ENCODE measurements at regions of chr4 and their contacts with region 1.

Region 1: GRCh38 chr4:7802093-7802726 is 137.5 kb downstream of the AFAP1 start:
- DNase-seq: peak; percentile 85
- H3K4me3 ChIP-seq: no peak overlapping the region
- H3K27ac ChIP-seq: no peak overlapping the region
- H3K4me1 ChIP-seq: peaks cover 8 to 38% (median 22%) of the 10 kb centered on the region in 4 donors
- H3K27me3 ChIP-seq: no peaks in the 10 kb centered on the region
- CTCF ChIP-seq: peak; percentile 90 to 94 (median 92)
- EP300 ChIP-seq: no peak
- POLR2A ChIP-seq: no peak

Region 2: DNA sequence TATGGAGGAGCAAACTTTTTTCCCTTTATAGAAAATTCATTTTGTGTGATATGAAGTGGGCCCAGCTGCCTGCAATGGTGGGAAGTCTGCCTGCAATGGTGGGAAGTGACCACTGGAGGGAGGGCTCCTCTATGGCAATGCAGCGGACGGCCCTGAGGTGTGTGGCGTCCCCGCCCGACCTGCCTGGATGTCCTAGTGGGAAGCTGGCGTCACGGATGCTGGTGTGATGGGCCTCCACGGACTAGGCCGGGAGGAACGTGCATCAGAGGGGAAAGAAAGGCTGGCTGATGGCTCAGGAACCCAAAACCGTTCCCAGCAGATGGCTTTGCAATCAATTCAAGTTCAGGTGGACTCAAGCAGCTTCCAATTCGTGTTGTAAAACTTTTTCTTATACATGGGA is 40.5 kb before region 1 on chr4:
- in situ Hi-C with region 1: no loop called
- intact Hi-C with region 1: loop called (anchors 2 kb)
- DNase-seq: peak; percentile 73
- H3K4me3 ChIP-seq: no peak overlapping the region
- H3K27ac ChIP-seq: peak overlapping the region; percentile 15 to 71 (median 52)
- H3K4me1 ChIP-seq: peaks cover 3 to 15% (median 12%) of the 10 kb centered on the region in 4 donors
- H3K27me3 ChIP-seq: no peaks in the 10 kb centered on the region
- CTCF ChIP-seq: peak; percentile 71 to 82 (median 79)
- EP300 ChIP-seq: no peak
- POLR2A ChIP-seq: no peak

Region 3: GRCh38 chr4:7872264-7872771 is 70.1 kb after region 1 on chr4:
- in situ Hi-C with region 1: no loop called
- intact Hi-C with region 1: loop called (anchors 5 kb)
- DNase-seq: no peak
- H3K4me3 ChIP-seq: no peak overlapping the region
- H3K27ac ChIP-seq: peak overlapping the region; percentile 41 to 67 (median 62)
- H3K4me1 ChIP-seq: peaks cover 0 to 28% (median 4%) of the 10 kb centered on the region in 4 donors
- H3K27me3 ChIP-seq: no peaks in the 10 kb centered on the region
- CTCF ChIP-seq: no peak
- EP300 ChIP-seq: no peak
- POLR2A ChIP-seq: no peak

Region 4: DNA sequence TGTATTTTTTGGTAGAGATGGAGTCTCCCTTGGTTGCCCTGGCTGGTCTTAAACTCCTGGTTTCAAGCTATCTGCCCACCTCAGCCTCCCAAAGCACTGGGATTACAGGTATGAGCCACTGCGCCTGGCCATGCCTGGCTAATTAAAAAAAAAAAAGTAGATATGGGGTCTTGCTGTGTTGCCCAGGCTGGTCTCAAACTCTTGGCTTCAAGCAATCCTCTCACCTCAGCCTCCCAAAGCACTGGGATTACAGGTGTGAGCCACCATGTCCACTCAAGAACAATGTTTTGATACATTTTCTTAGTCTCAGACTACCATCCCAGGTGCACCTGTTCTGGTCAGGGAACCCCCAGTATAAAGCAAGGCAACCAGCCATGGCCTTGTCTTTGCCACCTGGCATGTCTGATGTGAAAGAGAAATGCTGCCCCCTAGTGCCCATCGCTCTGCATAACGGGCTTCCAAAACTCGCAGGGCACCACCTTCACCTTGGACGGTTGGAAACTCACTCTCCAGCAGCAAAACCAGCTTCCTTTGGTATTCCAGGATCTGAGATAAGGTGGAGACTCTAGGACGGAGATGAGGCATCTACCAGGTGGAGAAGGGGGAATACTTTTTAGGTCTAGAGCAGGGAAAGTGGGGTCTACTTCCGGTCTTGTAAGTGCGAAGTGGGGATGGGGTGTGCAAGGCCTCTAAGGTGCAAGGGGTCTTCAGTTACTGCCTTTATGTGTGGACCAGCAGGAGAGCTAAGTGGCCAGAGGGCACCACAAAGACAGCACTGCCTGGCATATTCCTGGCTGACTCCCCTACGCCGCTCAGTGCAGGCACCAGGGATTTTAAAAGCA is 185.2 kb after region 1 on chr4:
- in situ Hi-C with region 1: loop called (anchors 5 to 10 kb)
- intact Hi-C with region 1: loop called (anchors 2 kb)
- DNase-seq: peak; percentile 79
- H3K4me3 ChIP-seq: no peak overlapping the region
- H3K27ac ChIP-seq: no peak overlapping the region
- H3K4me1 ChIP-seq: peaks cover 0 to 18% (median 9%) of the 10 kb centered on the region in 4 donors
- H3K27me3 ChIP-seq: no peaks in the 10 kb centered on the region
- CTCF ChIP-seq: peak; percentile 82 to 93 (median 85)
- EP300 ChIP-seq: no peak
- POLR2A ChIP-seq: no peak

Region 5: DNA sequence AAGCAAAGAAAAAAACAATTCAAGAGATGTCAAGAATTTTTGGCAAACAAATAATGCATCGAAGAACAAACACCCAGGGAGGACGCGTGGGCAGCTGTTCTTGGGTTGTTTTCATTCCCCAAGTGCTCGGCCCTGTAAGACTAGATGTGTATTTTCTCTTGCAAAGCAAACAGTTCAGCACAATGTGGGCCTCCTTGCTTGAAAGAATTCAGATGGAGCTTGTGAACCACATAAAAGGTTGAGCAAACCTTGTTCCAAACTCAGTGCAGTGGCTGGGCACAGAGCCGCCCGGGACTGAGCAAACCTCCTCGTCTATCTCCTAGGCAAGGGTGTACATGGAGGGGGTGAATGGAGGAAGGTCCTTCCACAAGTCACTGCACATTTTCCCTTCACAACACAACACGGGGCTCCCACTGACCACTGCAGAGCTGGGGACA is 549.7 kb after region 1 on chr4:
- in situ Hi-C with region 1: no loop called
- intact Hi-C with region 1: no loop called
- DNase-seq: no peak
- H3K4me3 ChIP-seq: no peak overlapping the region
- H3K27ac ChIP-seq: peak overlapping the region in 1 of 4 donors; percentile 34
- H3K4me1 ChIP-seq: peaks cover 8 to 23% (median 9%) of the 10 kb centered on the region in 4 donors
- H3K27me3 ChIP-seq: no peaks in the 10 kb centered on the region
- CTCF ChIP-seq: no peak
- EP300 ChIP-seq: no peak
- POLR2A ChIP-seq: no peak